ENCODE measurements at regions of chr5 and their contacts with region 1.

Region 1: DNA sequence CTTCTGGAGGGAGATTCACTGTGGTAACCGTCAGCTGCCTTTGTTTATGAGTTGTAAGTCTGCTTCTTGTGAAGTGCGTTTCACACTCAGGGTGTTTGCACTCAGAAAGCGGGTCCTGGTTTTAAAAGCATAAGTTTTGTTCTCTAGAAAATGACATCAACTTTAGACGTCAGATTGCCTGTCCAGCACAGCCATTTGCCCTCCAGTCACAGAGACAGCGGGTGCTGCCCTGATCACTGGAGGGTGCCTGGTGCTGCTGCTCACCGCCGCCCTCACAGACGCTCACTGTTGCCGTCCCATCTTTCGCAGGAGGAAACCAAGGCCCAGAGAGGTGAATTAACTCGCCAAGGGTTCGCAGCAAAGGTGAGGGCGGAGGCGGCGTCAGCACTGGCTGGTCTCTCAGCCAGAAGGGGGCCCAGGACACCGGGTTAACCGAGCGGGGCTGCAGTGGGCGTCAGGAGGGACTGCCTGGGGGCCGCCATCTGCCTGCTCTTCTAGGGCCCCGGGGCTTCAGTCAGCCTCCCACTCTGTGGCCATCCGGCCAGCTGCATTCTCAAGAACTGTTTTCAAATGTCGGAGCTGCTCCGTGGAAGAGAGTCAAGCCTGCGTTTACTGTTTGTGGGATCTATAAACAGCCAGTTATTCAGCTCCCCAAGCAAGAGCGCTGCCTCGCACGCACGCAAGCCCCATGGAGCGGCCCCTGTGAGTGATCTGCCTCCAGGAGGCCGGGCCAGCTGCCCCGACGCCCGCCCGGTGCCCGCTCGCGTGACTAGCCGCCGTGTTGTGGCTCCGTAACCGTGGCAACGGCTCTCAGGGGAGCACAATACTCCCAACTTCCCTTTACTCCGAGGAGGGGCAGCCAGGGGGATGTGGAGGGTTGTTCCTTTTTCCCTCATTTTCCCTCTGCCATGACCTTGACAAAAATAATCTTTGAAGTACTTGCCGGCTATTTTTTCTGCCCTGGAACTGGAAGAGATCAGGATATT is 43.4 kb upstream of the EXOC3 start:
- DNase-seq: peak; percentile 81
- ATAC-seq: peak; percentile 76
- H3K4me3 Mint-ChIP-seq: peak overlapping the region; percentile 69
- H3K27ac Mint-ChIP-seq: peak overlapping the region; percentile 91
- H3K4me1 Mint-ChIP-seq: peaks cover 49% of the 10 kb centered on the region
- H3K27me3 Mint-ChIP-seq: peaks cover 11% of the 10 kb centered on the region
- CTCF ChIP-seq: no peak

Region 2: GRCh38 chr5:217860-218456 is 181.6 kb before region 1 on chr5 and contains the starts of genes CCDC127 and SDHA:
- CTCF ChIA-PET with region 1: no interaction called
- POLR2A ChIA-PET with region 1: no interaction called
- intact Hi-C with region 1: loop called (anchors 2 kb)
- DNase-seq: peak; percentile 99
- ATAC-seq: peak; percentile 81
- H3K4me3 Mint-ChIP-seq: peak within 1 kb of the TSS; percentile 91
- H3K27ac Mint-ChIP-seq: peak within 1 kb of the TSS; percentile 85
- H3K4me1 Mint-ChIP-seq: peaks cover 65% of the 10 kb centered on the region
- H3K27me3 Mint-ChIP-seq: no peaks in the 10 kb centered on the region
- CTCF ChIP-seq: no peak
- total RNA-seq, gene CCDC127: 5.7 and 6.4 TPM in 2 replicates
- total RNA-seq, gene SDHA: 90.5 and 95.7 TPM in 2 replicates

Region 3: DNA sequence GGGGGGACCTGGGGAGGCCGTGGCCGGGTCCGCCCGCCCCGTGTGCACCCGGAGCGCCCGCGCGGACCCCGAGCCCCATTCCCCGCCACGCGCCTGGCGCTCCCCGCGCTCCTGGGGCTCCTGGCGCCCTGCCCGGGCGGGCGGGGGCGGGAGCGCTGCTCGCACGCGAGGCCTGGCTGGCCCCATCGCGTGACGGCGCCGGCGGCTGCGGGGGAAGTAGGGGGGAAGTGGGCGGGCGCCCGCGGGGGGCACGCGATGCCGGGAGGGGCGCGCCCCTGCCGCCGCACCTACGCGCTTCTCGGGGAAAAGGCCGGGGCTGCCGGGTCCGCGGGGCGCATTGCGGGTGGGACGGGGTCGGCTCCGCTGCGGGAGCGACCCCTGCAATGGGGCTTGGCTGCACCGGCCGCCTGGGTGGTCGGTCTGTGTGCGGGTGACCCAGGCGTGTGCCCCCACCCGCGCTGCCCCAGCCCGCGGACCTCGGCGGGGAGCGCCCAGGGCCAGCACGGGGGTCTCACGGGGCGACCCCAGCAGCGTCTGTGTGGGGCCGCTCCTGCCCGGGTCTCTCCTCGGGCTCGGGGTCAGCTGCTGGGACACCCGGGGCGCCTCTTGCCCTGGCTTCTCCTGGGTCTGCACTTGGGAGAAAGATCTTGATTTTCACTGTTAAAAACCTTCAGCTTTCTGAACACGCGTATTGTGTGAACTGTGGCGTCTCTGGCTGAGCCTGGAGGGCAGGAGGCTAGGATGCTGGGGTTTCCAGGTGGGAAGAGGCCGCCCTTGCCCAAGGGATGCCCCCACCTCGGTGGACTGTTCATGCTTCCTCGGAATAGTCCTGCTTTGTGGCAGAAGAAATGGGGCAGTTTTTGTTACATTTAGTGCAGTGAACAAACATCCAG is 25.6 kb before region 1 on chr5:
- CTCF ChIA-PET with region 1: no interaction called
- POLR2A ChIA-PET with region 1: interaction called, 6 read pairs
- intact Hi-C with region 1: loop called (anchors 2 kb)
- DNase-seq: peak; percentile 58
- ATAC-seq: peak; percentile 64
- H3K4me3 Mint-ChIP-seq: peak overlapping the region; percentile 46
- H3K27ac Mint-ChIP-seq: peak overlapping the region; percentile 66
- H3K4me1 Mint-ChIP-seq: peaks cover 11% of the 10 kb centered on the region
- H3K27me3 Mint-ChIP-seq: peaks cover 24% of the 10 kb centered on the region
- CTCF ChIP-seq: no peak

Region 4: DNA sequence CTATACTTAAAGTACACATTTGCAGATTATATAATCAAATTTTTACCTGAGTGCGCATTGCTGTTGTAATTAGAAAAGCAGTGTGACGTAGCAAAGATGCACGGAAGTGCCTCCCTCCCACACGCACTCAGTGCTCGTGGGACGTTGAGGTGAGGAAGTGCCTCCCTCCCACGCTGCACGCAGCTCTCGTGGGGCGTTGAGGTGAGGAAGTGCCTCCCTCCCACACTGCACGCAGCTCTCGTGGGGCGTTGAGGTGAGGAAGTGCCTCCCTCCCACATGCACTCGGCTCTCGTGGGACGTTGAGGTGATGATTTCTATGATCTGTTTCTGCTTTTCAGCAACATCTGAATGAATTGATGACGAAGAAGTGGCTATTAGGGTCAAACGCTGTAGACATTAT is 64.4 kb after region 1 on chr5:
- CTCF ChIA-PET with region 1: no interaction called
- POLR2A ChIA-PET with region 1: no interaction called
- intact Hi-C with region 1: loop called (anchors 2 kb)
- DNase-seq: peak; percentile 61
- ATAC-seq: peak; percentile 95
- H3K4me3 Mint-ChIP-seq: no peak overlapping the region
- H3K27ac Mint-ChIP-seq: peak overlapping the region; percentile 13
- H3K4me1 Mint-ChIP-seq: peaks cover 37% of the 10 kb centered on the region
- H3K27me3 Mint-ChIP-seq: no peaks in the 10 kb centered on the region
- CTCF ChIP-seq: no peak

Measured in activated B cell treated with CpG ODN at 0.5 μM for 24 hours (primary cell).